SK-N-SH (cell line): ENCODE measurements at regions of chr17 and their contacts with region 1.

Region 1: GRCh38 chr17:42405963-42406495 is 17.0 kb downstream of the CAVIN1 start:
- DNase-seq: peak; percentile 89
- H3K4me3 ChIP-seq: peak overlapping the region in 1 of 2 experiments; percentile 18; a peak in 1 of 4 replicates
- H3K27ac ChIP-seq: no peak overlapping the region; a peak in 1 of 4 replicates
- H3K4me1 ChIP-seq: peaks cover 18 to 35% of the 10 kb centered on the region in 2 experiments; a peak in 3 of 4 replicates
- H3K27me3 ChIP-seq: no peaks in the 10 kb centered on the region
- CTCF ChIP-seq: peak; percentile 79
- EP300 ChIP-seq: no peak
- RAD21 ChIP-seq: peak; percentile 92

Region 2: GRCh38 chr17:42200702-42201101 is 205.3 kb before region 1 on chr17:
- CTCF ChIA-PET with region 1: interaction called, 10 read pairs
- POLR2A ChIA-PET with region 1: no interaction called
- DNase-seq: peak; percentile 82
- H3K4me3 ChIP-seq: no peak overlapping the region
- H3K27ac ChIP-seq: peak overlapping the region in 1 of 2 experiments; percentile 83; a peak in 2 of 4 replicates
- H3K4me1 ChIP-seq: peaks cover 0 to 12% of the 10 kb centered on the region in 2 experiments; a peak in 1 of 4 replicates
- H3K27me3 ChIP-seq: no peaks in the 10 kb centered on the region
- CTCF ChIP-seq: no peak
- EP300 ChIP-seq: no peak
- RAD21 ChIP-seq: no peak

Region 3: GRCh38 chr17:42322382-42323267 is 83.4 kb before region 1 on chr17:
- CTCF ChIA-PET with region 1: interaction called, 683 read pairs
- POLR2A ChIA-PET with region 1: interaction called, 5 read pairs
- DNase-seq: peak; percentile 90
- H3K4me3 ChIP-seq: no peak overlapping the region; a peak in 1 of 4 replicates
- H3K27ac ChIP-seq: no peak overlapping the region
- H3K4me1 ChIP-seq: peaks cover 6 to 27% of the 10 kb centered on the region in 2 experiments; a peak in 3 of 4 replicates
- H3K27me3 ChIP-seq: no peaks in the 10 kb centered on the region
- CTCF ChIP-seq: peak; percentile 99
- EP300 ChIP-seq: no peak
- RAD21 ChIP-seq: peak; percentile 99

Region 4: GRCh38 chr17:42388381-42389134 is 17.5 kb before region 1 on chr17 and contains the start of gene STAT3:
- CTCF ChIA-PET with region 1: interaction called, 16 read pairs
- POLR2A ChIA-PET with region 1: no interaction called
- DNase-seq: peak; percentile 97
- H3K4me3 ChIP-seq: peak within 1 kb of the TSS; percentile 80 to 93
- H3K27ac ChIP-seq: peak within 1 kb of the TSS; percentile 87 to 94
- H3K4me1 ChIP-seq: peaks cover 0 to 12% of the 10 kb centered on the region in 2 experiments; a peak in 2 of 4 replicates
- H3K27me3 ChIP-seq: no peaks in the 10 kb centered on the region
- CTCF ChIP-seq: no peak; the same call in 1 of the 2 replicates
- EP300 ChIP-seq: peak; percentile 100
- RAD21 ChIP-seq: no peak
- polyA plus RNA-seq, gene STAT3: 35.7 and 38.7 TPM in 2 replicates